ENCODE measurements at regions of chr17 and their contacts with region 1.

Region 1: GRCh38 chr17:48429638-48430586 is at the start of gene SKAP1:
- DNase-seq: peak; percentile 72
- H3K4me3 Mint-ChIP-seq: peak within 1 kb of the TSS; percentile 89
- H3K27ac Mint-ChIP-seq: peak within 1 kb of the TSS; percentile 92
- H3K4me1 Mint-ChIP-seq: peaks cover 48% of the 10 kb centered on the region
- H3K27me3 Mint-ChIP-seq: no peaks in the 10 kb centered on the region
- total RNA-seq, gene SKAP1: 132 to 133 TPM

Region 2: DNA sequence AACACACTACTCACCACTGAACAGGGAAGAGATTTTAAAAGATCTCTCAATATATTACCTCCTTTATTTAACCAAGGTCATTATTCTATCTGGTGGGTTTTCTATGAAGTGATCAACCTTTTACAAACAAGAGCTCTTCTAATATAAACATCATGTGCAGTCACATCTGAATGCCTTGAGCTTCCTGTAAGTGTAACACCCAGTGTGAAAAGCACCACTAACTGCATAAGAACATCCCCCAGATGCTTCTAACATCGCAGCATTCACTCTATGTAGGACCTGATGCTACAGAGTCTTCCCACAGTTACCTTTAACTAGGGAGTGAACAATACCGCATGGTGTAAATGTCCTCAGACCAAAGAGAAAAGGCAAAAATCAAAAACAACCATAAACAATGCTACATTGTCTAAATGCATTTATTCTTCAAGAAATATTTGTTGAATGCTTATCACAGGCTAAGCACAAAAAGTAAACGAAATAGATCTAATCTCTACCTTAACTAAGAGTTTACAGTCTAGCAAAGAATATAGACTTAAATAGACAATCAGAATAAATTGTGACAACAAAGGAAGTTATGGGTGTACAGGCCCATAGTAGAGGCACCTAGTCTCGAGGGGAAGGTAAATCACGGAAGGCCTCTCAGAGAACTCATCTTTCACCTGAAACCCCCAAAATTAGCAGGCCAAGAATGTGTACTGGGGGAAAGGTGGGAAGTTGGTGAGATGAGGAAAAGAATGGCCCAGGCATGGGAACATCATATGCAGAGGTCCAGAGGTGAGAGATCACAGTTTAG is 16.1 kb before region 1 on chr17:
- CTCF ChIA-PET with region 1: interaction called, 4 read pairs
- POLR2A ChIA-PET with region 1: interaction called, 11 read pairs
- DNase-seq: no peak
- H3K4me3 Mint-ChIP-seq: no peak overlapping the region
- H3K27ac Mint-ChIP-seq: peak overlapping the region; percentile 64
- H3K4me1 Mint-ChIP-seq: peaks cover 69% of the 10 kb centered on the region
- H3K27me3 Mint-ChIP-seq: no peaks in the 10 kb centered on the region

Region 3: GRCh38 chr17:48441231-48441711 is 11.4 kb after region 1 on chr17:
- CTCF ChIA-PET with region 1: interaction called, 5 read pairs
- POLR2A ChIA-PET with region 1: interaction called, 141 read pairs
- DNase-seq: peak; percentile 61
- H3K4me3 Mint-ChIP-seq: peak overlapping the region; percentile 54
- H3K27ac Mint-ChIP-seq: peak overlapping the region; percentile 97
- H3K4me1 Mint-ChIP-seq: peaks cover 93% of the 10 kb centered on the region
- H3K27me3 Mint-ChIP-seq: no peaks in the 10 kb centered on the region

Measured in activated CD4-positive, alpha-beta memory T cell treated with anti-CD3 and anti-CD28 coated beads, Interleukin-2, amount 10 ng/mL, durations not matched to agents 7 days and 5 days (primary cell).